Heart left ventricle (tissue), 16 donors: ENCODE measurements at regions of chr14 and their contacts with region 1.

Region 1: GRCh38 chr14:92793709-92794546 is at the start of gene GOLGA5:
- DNase-seq: peak; percentile 98 to 99 (median 98)
- ATAC-seq: peak; percentile 98 to 99 (median 98)
- H3K4me3 ChIP-seq: peak within 1 kb of the TSS; percentile 70 to 99 (median 96)
- H3K27ac ChIP-seq: peak within 1 kb of the TSS; percentile 53 to 96 (median 88)
- H3K4me1 ChIP-seq: peaks cover 0 to 33% (median 14%) of the 10 kb centered on the region in 12 donors
- H3K27me3 ChIP-seq: no peaks in the 10 kb centered on the region
- CTCF ChIP-seq: peak in 5 of 12 donors; percentile 5 to 28 (median 21)
- POLR2A ChIP-seq: peak in 1 of 2 donors; percentile 74
- total RNA-seq, gene GOLGA5: 18.1 to 25.9 (median 23.6) TPM

Region 2: GRCh38 chr14:92748259-92749016 is 45.5 kb before region 1 on chr14 and contains the start of gene LGMN:
- intact Hi-C with region 1: loop called in 4 of 10 experiments (anchors 5 kb)
- DNase-seq: peak; percentile 97 to 99 (median 98)
- ATAC-seq: peak; percentile 96 to 99 (median 98)
- H3K4me3 ChIP-seq: peak within 1 kb of the TSS; percentile 45 to 93 (median 81)
- H3K27ac ChIP-seq: peak within 1 kb of the TSS; percentile 58 to 94 (median 88)
- H3K4me1 ChIP-seq: peaks cover 0 to 62% (median 22%) of the 10 kb centered on the region in 12 donors
- H3K27me3 ChIP-seq: peaks cover 0 to 8% (median 0%) of the 10 kb centered on the region in 9 donors
- CTCF ChIP-seq: no peak
- POLR2A ChIP-seq: peak; percentile 89 to 100
- total RNA-seq, gene LGMN: 92.7 to 327 (median 114) TPM